Cardiac septum (tissue), 1 donor: ENCODE measurements at regions of chr13 and their contacts with region 1.

Region 1: DNA sequence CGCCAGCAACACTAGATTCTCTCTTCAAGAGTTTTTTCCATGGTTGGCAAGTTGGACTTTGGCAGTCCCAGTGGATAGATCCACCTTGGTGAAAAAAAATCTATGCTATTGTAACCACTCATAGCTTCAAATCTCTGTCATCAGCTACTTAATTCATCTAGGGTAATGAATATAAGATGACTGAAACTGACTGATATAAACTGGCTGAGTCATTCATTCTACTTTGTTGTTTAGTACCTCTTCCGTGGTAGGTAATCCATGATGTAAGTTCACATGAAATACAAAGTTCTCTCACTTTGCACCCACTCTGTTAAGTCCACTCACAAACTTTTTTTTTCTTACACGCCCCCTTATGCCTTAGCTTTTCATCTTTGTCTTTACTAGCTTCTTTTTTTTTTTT is 1381.5 kb downstream of the SLITRK5 start:
- DNase-seq: no peak

Region 2: DNA sequence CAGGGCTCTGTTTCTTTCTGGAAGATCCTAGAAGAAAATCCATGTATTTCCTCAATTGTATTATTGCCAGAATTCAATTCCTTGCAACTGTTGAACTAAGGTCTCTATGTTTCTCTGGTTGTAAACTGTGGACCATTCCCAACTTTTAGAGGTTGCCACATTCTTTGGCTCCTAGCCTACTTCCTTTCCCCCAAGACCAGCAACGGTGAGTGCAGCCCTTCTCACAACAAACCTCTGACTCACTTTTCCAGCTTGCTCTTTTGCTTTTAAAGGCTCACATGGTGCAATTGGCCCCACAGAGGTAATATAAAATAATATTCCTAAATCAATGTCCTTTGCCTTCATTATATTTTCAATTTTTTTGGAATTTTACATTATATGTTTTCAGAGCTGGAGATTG is 1010.2 kb before region 1 on chr13:
- intact Hi-C with region 1: loop called (anchors 10 kb)
- DNase-seq: no peak

Region 3: GRCh38 chr13:88246239-88246638 is 806.5 kb before region 1 on chr13:
- intact Hi-C with region 1: no loop called
- DNase-seq: no peak

Region 4: DNA sequence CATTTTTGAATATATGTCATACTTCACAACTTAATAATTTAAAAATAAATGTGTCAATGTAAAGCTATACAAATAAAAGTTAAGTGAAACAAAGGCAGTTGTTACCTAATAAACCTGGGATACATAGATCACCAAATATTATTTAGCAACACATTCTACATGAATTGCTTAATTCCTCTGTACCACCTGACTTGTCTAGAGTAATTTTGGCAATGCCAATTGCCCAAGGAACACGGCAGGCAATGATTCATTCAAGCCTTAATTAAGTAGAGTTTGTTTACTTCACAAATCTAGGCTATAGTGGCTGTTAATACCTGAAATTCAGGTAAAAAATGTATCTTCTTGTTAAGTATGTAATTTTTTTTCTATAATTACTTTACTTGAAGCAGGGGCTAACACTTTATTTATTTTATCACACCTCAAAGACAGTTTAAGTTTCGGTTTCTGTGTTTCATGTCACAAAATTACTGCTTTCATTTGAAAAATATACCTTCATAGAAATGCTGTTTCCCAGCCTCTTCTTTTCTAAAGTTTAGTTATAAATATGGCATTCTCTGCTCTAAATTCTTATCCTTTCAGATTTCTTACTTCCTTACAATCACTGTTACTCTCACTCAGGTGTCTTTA is 675.8 kb before region 1 on chr13:
- intact Hi-C with region 1: no loop called
- DNase-seq: no peak

Region 5: DNA sequence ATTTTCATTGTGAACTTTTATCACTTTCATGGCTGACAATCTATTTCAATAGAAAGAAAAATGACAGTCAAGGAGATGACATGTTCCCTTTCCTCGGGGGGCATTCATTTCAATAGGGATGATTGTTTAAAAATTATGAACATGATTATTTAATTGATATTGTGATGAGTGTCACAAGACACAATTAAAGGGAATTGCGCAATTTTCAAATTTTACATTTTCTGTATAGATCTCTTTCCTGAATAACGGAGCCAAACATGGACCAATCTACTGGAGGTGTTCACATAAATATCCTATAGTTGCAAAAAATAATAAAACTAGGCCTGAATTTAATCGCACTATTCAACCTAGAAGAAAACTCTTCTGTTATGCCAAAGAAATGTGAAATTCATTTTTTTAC is 106.9 kb before region 1 on chr13:
- intact Hi-C with region 1: no loop called
- DNase-seq: no peak

Region 6: DNA sequence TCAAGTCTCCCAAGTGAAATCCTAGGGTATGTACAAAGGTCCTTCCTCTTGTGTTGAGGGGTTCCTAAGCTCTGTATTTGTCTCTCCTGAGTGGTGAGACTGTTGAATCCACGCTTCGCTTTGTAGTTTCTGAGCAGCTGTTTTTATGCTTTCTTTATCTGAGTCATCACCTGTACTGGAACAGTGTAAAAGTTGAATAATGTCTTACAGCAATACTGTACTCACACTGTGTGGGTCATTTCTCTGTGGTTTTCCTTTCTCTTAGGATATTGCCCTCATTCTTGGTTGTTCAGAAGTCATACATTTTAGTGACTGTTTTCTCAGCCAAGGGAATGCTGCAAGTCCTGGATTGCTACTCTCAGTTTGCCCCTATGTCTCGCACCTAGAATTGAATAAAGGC is 215.0 kb after region 1 on chr13:
- intact Hi-C with region 1: no loop called
- DNase-seq: no peak